Naive thymus-derived CD4-positive, alpha-beta T cell (primary cell): ENCODE measurements at regions of chr10 and their contacts with region 1.

Region 1: GRCh38 chr10:27959093-27959715 is 39.7 kb downstream of the ODAD2 start:
- DNase-seq: no peak
- ATAC-seq: no peak
- H3K4me3 ChIP-seq: no peak overlapping the region
- H3K4me3 Mint-ChIP-seq: peak overlapping the region in 8 of 10 donors; percentile 25 to 83 (median 76)
- H3K27ac ChIP-seq: no peak overlapping the region
- H3K27ac Mint-ChIP-seq: peak overlapping the region in 5 of 9 donors; percentile 47 to 76 (median 64)
- H3K4me1 ChIP-seq: no peaks in the 10 kb centered on the region
- H3K4me1 Mint-ChIP-seq: peaks cover 7 to 22% (median 17%) of the 10 kb centered on the region in 7 donors
- H3K27me3 ChIP-seq: no peaks in the 10 kb centered on the region
- H3K27me3 Mint-ChIP-seq: no peaks in the 10 kb centered on the region

Region 2: DNA sequence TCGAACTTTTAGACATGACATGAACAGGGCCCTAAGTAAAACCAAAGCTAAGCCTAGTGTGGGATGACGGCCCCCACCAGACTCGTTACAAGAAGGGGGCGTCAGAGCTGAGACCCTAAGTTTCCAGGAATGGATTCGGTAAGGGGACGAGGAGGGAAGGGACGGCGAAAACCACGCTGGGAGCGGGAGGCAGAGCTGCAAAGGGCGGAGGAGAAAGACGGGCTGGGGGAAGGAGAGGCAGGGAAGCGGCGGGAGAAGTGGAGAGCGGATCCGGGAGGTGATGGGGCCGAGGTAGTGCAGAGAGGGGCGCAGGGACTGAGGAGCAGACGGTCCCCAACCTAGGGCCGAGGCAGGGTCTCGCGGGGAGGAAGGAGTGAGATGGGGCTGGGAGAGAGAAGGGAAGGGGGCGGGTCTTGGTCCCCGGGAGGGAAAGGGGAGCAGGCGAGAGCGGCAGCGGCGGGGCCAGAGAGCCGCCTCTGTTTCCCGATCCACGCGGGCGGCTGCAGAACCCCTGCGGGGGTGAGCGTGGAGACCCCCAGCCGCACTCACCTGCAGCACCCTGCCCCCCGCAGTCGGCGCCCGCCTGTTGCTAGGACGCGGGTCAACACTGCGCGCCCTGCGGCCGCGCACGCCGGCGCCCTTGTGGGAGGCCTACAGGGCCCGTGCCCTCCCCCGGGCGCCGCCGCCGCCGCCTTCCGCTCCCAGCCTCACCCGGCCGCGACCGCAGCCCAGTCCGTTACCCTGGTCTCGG is 39.2 kb after region 1 on chr10:
- CTCF ChIA-PET with region 1: no interaction called
- POLR2A ChIA-PET with region 1: no interaction called
- intact Hi-C with region 1: loop called in 1 of 2 experiments (anchors 1 kb)
- DNase-seq: peak in 7 of 9 donors; percentile 8 to 23 (median 9)
- ATAC-seq: peak; percentile 81
- H3K4me3 ChIP-seq: peak overlapping the region; percentile 53
- H3K4me3 Mint-ChIP-seq: peak overlapping the region; percentile 77 to 96 (median 90)
- H3K27ac ChIP-seq: no peak overlapping the region
- H3K27ac Mint-ChIP-seq: peak overlapping the region in 2 of 9 donors; percentile 7 to 93
- H3K4me1 ChIP-seq: peaks cover 0 to 6% of the 10 kb centered on the region in 2 donors
- H3K4me1 Mint-ChIP-seq: peaks cover 0 to 20% (median 14%) of the 10 kb centered on the region in 7 donors
- H3K27me3 ChIP-seq: no peaks in the 10 kb centered on the region
- H3K27me3 Mint-ChIP-seq: peaks cover 50 to 72% (median 62%) of the 10 kb centered on the region in 5 donors